Activated T-helper 2 cell treated with anti-CD3 and anti-CD28 coated beads, Interferon-gamma antibody, Interleukin-2, Interleukin-4, amounts not matched to agents 10 μg/mL and 5 μg/mL and 100 μg/mL, durations not matched to agents 14 hours and 24 hours and 36 hours (primary cell): ENCODE measurements at regions of chr18 and their contacts with region 1.

Region 1: GRCh38 chr18:22169007-22169864 is at the start of gene GATA6:
- DNase-seq: no peak
- H3K4me3 Mint-ChIP-seq: peak within 1 kb of the TSS; percentile 74
- H3K27ac Mint-ChIP-seq: peak within 1 kb of the TSS; percentile 55
- H3K4me1 Mint-ChIP-seq: peaks cover 12% of the 10 kb centered on the region
- H3K27me3 Mint-ChIP-seq: peaks cover 74% of the 10 kb centered on the region
- total RNA-seq, gene GATA6: not detected in 2 replicates

Region 2: DNA sequence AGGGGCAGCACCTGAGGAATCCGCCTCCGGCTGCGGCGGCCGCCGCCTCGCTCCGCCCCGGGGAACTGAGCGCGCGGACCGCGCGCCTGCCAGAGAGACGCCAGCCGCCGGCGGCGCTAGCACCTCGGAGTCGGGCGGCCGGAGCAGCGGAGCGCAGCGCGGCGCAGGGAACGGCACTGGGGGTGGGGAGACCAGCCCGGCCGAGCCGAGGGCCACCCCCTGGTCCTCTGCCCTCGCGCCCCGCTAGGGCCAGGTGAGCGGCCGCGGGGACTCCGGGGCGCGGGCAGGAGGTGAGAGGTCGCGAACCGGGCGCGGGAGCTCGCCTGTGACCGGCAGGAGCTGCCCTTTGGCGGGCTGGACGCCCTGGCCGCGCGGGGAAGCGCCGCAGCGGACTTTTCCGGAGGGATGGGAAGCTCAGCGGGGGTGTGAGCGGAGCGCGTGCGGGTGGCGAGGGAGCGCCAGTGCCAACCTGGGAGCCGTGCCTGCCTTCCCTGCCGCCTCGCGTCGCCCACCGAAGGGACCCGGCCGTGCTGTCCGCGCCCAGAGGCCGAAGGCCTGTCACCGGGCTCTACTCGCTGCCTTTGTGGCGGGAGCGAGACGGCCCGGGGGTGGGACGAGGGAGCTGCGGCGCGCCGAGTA is 927.0 kb before region 1 on chr18 and contains the start of gene GREB1L:
- intact Hi-C with region 1: loop called (anchors 10 kb)
- DNase-seq: no peak
- H3K4me3 Mint-ChIP-seq: no peak within 1 kb of the TSS
- H3K27ac Mint-ChIP-seq: no peak within 1 kb of the TSS
- H3K4me1 Mint-ChIP-seq: no peaks in the 10 kb centered on the region
- H3K27me3 Mint-ChIP-seq: peaks cover 59% of the 10 kb centered on the region
- total RNA-seq, gene GREB1L: not detected in 2 replicates

Region 3: DNA sequence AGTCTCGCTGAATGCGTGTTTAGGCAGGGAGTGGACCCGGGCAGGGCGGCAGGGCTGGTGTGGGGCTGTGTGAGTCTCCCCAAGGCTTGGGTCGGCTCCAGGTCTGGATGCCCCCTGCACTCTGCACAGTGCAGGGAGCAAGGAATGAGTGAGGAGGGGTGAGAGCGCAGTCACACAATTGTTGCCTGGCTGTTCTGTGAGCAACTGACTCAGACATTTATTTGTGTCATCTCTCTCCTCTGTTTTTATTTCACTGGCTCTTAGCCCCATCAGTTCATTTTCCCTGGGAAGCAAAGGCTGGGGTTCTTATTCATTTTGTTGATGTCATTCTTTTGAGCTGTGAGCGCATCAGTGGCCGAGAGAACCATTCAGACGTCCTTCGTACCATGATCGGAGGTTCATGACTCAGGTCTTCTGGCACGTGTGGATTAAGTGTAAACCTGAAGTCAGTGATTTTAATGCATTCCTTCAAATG is 61.3 kb after region 1 on chr18:
- intact Hi-C with region 1: loop called (anchors 10 kb)
- DNase-seq: no peak
- H3K4me3 Mint-ChIP-seq: no peak overlapping the region
- H3K27ac Mint-ChIP-seq: no peak overlapping the region
- H3K4me1 Mint-ChIP-seq: no peaks in the 10 kb centered on the region
- H3K27me3 Mint-ChIP-seq: no peaks in the 10 kb centered on the region

Region 4: DNA sequence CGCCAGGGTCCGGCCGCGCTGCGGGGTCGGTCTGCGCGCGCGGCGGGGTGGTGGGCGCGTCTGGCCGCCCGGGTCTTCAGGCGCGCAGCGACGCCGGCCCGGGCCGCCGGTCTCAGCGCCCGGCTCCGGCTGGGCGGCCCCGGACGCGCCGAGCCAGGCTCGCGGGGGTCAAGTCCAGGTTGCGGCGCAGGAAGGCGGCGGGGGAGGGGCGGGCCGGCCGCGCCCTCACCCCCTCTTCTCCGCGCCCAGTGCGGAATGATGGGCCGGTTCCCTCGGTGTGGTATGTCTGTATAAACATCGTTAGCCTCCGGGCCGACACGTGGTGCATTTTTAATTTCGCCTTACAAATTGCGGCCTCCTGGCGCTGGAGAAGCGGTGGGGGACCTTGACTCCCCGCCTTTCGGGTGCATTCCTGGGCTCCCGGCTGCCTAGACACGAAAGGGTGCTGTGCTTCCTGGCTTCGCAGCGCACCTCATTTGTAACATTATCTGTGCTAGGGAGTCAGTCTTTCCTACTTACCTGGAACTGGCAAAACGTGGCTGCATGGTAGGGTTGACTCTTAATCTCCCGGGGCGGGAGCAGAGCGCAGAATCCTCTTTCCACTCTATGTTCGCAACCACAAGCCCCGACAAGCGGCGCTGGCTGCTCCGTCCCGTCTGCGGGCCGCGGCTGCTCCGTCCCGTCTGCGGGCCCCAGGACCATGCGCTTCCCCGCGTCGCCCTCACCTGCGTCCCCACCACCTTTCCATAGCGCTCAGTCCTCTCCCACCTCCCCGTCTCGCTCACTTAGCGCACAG is 179.5 kb after region 1 on chr18:
- intact Hi-C with region 1: loop called (anchors 2 kb)
- DNase-seq: no peak
- H3K4me3 Mint-ChIP-seq: no peak overlapping the region
- H3K27ac Mint-ChIP-seq: no peak overlapping the region
- H3K4me1 Mint-ChIP-seq: no peaks in the 10 kb centered on the region
- H3K27me3 Mint-ChIP-seq: peaks cover 43% of the 10 kb centered on the region

Region 5: DNA sequence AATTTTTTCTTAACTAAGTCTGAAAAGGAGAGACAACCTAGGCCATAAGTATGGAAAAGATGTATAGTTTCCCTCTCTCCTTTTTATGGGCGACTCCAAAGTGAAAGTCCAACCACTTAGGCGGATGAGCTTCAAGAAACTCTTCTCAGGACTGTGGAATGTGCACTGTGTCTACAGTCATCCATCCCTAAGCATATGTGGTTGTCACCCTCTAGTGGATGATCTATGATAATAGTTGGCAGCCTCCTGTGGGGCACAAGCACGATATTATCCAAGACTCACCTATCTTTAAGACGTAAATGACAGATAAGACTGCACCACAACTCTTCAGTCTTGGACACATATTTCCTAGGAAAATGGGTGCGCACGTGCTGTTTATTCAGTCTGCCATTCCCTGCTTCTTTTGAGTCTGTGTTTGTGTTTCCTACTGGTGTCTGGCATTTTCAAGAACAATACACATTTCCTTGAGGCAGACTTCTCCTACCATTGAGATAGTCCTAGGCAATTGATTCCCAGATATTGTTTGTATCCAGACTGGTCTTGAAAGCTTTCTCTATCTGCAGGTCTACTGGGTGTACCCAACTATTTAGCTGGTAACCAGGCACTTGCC is 394.0 kb after region 1 on chr18:
- intact Hi-C with region 1: loop called (anchors 5 kb)
- DNase-seq: no peak
- H3K4me3 Mint-ChIP-seq: no peak overlapping the region
- H3K27ac Mint-ChIP-seq: no peak overlapping the region
- H3K4me1 Mint-ChIP-seq: peaks cover 4% of the 10 kb centered on the region
- H3K27me3 Mint-ChIP-seq: peaks cover 23% of the 10 kb centered on the region